RWPE1 (cell line): ENCODE measurements at regions of chr2 and their contacts with region 1.

Region 1: DNA sequence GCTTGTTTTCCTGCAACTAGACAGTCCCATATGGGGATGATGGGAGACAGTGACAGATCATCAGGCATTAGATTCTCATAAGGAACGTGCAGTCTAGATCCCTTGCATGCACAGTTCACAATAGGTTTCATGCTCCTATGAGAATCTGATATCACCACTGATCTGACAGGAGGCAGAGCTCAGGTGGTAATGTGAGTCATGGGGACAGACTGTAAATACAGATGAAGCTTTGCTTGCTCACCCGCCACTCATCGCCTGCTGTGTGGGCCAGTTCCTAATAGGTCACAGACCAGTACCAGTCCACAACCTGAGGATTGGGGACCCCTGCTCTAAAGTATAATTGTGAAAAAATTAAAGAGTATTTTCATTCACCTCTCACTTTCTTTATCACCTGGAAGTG is 23.6 kb upstream of the RAB1A start:
- DNase-seq: no peak
- H3K27ac ChIP-seq: no peak overlapping the region
- CTCF ChIP-seq: no peak

Region 2: GRCh38 chr2:65227425-65228262 is 74.1 kb after region 1 on chr2 and contains the start of gene ACTR2:
- CTCF ChIA-PET with region 1: interaction called, 10 read pairs
- POLR2A ChIA-PET with region 1: no interaction called
- DNase-seq: peak; percentile 92
- H3K27ac ChIP-seq: peak within 1 kb of the TSS; percentile 97
- CTCF ChIP-seq: no peak